GM12878 (cell line): ENCODE measurements at regions of chr22 and their contacts with region 1.

Region 1: DNA sequence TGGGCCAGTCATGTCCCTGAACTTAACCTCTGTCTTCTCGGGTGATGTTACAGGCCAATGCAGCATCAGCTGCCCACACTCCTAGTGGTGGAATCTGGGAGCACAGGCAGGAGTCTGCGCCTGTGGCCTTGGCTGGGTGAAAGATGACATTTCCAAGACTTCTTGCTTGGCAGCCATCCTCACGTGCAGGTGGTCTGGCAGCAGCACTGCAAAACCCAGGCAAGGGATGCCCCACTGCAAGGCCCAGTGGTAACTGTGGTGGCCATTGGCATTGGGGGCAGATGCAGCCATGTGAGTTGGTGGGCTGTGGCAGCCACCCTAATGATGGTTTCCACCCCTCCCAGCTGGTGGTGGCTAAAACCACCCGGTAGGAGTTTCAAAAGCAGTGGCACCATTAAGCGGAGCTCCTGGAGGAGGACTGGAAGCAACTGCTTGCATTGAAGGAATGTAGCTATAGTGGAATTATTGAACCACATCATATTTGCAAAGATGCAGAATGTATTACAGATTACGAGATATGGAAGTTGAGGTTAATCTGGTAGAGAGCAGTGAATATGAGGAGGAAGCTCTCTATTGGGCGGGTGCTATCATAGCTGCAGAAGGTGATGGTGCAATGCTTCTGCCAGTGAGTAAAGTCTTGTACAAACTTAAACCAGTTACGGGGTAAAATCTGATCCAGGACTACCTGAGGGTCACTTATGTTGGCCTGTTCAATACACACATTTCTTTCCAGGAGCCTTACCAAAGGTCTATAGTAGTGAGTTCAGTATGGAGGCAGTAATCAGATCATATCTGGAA is 120.7 kb upstream of the TOP3B start:
- DNase-seq: no peak
- ATAC-seq: 0 out of 3 replicates have a peak, but pooled peaks have one; percentile 18
- H3K4me3 ChIP-seq: no peak overlapping the region
- H3K27ac ChIP-seq: no peak overlapping the region
- H3K4me1 ChIP-seq: peaks cover 9% of the 10 kb centered on the region
- H3K27me3 ChIP-seq: no peaks in the 10 kb centered on the region
- CTCF ChIP-seq: peak; percentile 17 to 60 (median 30); a peak in 5 of 6 replicates
- EP300 ChIP-seq: no peak
- POLR2A ChIP-seq: no peak
- RAD21 ChIP-seq: no peak

Region 2: GRCh38 chr22:22043296-22044078 is 59.8 kb before region 1 on chr22:
- CTCF ChIA-PET with region 1: interaction called, 39 read pairs
- POLR2A ChIA-PET with region 1: interaction called, 10 read pairs
- RAD21 ChIA-PET with region 1: interaction called, 31 read pairs
- SMC1A ChIA-PET with region 1: interaction called, 40 read pairs
- in situ Hi-C with region 1: no loop called
- intact Hi-C with region 1: no loop called
- DNase-seq: no peak
- ATAC-seq: peak; percentile 85
- H3K4me3 ChIP-seq: peak overlapping the region; percentile 44; the same call in 1 of the 2 replicates
- H3K27ac ChIP-seq: peak overlapping the region; percentile 58
- H3K4me1 ChIP-seq: peaks cover 15% of the 10 kb centered on the region
- H3K27me3 ChIP-seq: no peaks in the 10 kb centered on the region
- CTCF ChIP-seq: peak in 2 of 3 experiments; percentile 2 to 20; a peak in 1 of 6 replicates
- EP300 ChIP-seq: no peak
- POLR2A ChIP-seq: peak; percentile 56
- RAD21 ChIP-seq: no peak

Region 3: GRCh38 chr22:22074634-22075381 is 28.5 kb before region 1 on chr22:
- CTCF ChIA-PET with region 1: interaction called, 11 read pairs
- POLR2A ChIA-PET with region 1: no interaction called
- RAD21 ChIA-PET with region 1: interaction called, 3 read pairs
- SMC1A ChIA-PET with region 1: interaction called, 8 read pairs
- in situ Hi-C with region 1: no loop called
- intact Hi-C with region 1: no loop called
- DNase-seq: no peak
- ATAC-seq: no peak
- H3K4me3 ChIP-seq: no peak overlapping the region
- H3K27ac ChIP-seq: no peak overlapping the region
- H3K4me1 ChIP-seq: peaks cover 11% of the 10 kb centered on the region
- H3K27me3 ChIP-seq: no peaks in the 10 kb centered on the region
- CTCF ChIP-seq: no peak
- EP300 ChIP-seq: no peak
- POLR2A ChIP-seq: no peak
- RAD21 ChIP-seq: no peak

Region 4: GRCh38 chr22:22123118-22123959 is 20.1 kb after region 1 on chr22:
- CTCF ChIA-PET with region 1: interaction called, 56 read pairs
- POLR2A ChIA-PET with region 1: interaction called, 3 read pairs
- RAD21 ChIA-PET with region 1: interaction called, 12 read pairs
- SMC1A ChIA-PET with region 1: interaction called, 22 read pairs
- in situ Hi-C with region 1: no loop called
- intact Hi-C with region 1: no loop called
- DNase-seq: no peak
- ATAC-seq: no peak
- H3K4me3 ChIP-seq: no peak overlapping the region
- H3K27ac ChIP-seq: no peak overlapping the region
- H3K4me1 ChIP-seq: no peaks in the 10 kb centered on the region
- H3K27me3 ChIP-seq: no peaks in the 10 kb centered on the region
- CTCF ChIP-seq: no peak
- EP300 ChIP-seq: no peak
- POLR2A ChIP-seq: no peak
- RAD21 ChIP-seq: no peak

Region 5: DNA sequence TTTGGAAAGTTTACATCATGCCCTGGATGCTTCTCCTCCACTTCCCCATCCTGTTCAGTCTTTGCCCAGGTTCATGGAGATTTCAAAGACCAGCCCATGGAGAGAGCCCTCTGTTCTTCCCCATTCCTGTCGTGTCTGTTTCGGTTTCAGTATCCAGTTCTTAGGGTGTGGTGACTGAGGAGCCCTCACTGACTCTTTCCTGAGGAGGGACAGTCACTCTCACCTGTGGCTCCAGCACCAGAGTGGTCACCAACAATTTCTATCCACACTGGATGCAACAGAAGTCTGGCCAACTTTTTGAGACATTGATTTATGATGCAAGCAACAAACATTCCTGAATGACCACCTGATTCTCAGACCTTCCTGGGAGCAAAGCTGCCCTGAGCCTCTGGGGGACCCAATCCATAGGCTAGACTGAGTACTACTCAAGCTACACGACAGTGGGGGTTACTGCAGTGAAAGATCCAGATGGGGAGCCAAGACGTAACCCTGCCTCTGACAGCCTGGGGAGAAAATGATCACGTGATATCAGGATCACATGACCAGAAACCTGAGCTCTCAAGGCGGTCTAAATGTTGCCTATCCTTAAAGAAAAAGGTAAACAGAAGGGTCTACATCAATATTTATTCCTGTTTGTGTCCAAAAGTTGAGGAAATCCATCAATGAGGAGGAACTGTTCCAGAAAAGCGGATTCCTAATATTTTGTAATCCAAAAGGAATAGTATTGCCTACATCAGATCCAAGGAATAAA is 65.1 kb after region 1 on chr22:
- CTCF ChIA-PET with region 1: interaction called, 26 read pairs
- POLR2A ChIA-PET with region 1: interaction called, 3 read pairs
- RAD21 ChIA-PET with region 1: interaction called, 6 read pairs
- SMC1A ChIA-PET with region 1: interaction called, 9 read pairs
- in situ Hi-C with region 1: no loop called
- intact Hi-C with region 1: no loop called
- DNase-seq: peak; percentile 57
- ATAC-seq: peak; percentile 74
- H3K4me3 ChIP-seq: peak overlapping the region; percentile 52; the same call in 1 of the 2 replicates
- H3K27ac ChIP-seq: peak overlapping the region; percentile 83
- H3K4me1 ChIP-seq: peaks cover 15% of the 10 kb centered on the region
- H3K27me3 ChIP-seq: no peaks in the 10 kb centered on the region
- CTCF ChIP-seq: no peak
- EP300 ChIP-seq: no peak
- POLR2A ChIP-seq: no peak; the same call in 1 of the 2 replicates
- RAD21 ChIP-seq: no peak